CD8-positive, alpha-beta T cell (primary cell): ENCODE measurements at regions of chr2 and their contacts with region 1.

Region 1: GRCh38 chr2:102240640-102241370 is 54.0 kb downstream of the IL1RL2 start:
- DNase-seq: peak; percentile 71 to 92 (median 85)
- ATAC-seq: peak; percentile 92
- H3K4me3 ChIP-seq: no peak overlapping the region
- H3K4me3 Mint-ChIP-seq: peak overlapping the region; percentile 22
- H3K27ac ChIP-seq: peak overlapping the region in 1 of 2 experiments; percentile 22
- H3K27ac Mint-ChIP-seq: no peak overlapping the region
- H3K4me1 ChIP-seq: peaks cover 4% of the 10 kb centered on the region
- H3K4me1 Mint-ChIP-seq: peaks cover 9% of the 10 kb centered on the region
- H3K27me3 ChIP-seq: no peaks in the 10 kb centered on the region
- H3K27me3 Mint-ChIP-seq: peaks cover 2% of the 10 kb centered on the region
- CTCF ChIP-seq: peak; percentile 95

Region 2: GRCh38 chr2:101012706-101013181 is 1228.1 kb before region 1 on chr2:
- CTCF ChIA-PET with region 1: no interaction called
- POLR2A ChIA-PET with region 1: no interaction called
- intact Hi-C with region 1: loop called in 1 of 2 experiments (anchors 10 kb)
- DNase-seq: peak in 6 of 9 experiments; percentile 11 to 65 (median 44)
- ATAC-seq: peak; percentile 38
- H3K4me3 ChIP-seq: no peak overlapping the region
- H3K4me3 Mint-ChIP-seq: no peak overlapping the region
- H3K27ac ChIP-seq: no peak overlapping the region
- H3K27ac Mint-ChIP-seq: no peak overlapping the region
- H3K4me1 ChIP-seq: no peaks in the 10 kb centered on the region
- H3K4me1 Mint-ChIP-seq: peaks cover 15% of the 10 kb centered on the region
- H3K27me3 ChIP-seq: no peaks in the 10 kb centered on the region
- H3K27me3 Mint-ChIP-seq: no peaks in the 10 kb centered on the region
- CTCF ChIP-seq: peak; percentile 96

Region 3: DNA sequence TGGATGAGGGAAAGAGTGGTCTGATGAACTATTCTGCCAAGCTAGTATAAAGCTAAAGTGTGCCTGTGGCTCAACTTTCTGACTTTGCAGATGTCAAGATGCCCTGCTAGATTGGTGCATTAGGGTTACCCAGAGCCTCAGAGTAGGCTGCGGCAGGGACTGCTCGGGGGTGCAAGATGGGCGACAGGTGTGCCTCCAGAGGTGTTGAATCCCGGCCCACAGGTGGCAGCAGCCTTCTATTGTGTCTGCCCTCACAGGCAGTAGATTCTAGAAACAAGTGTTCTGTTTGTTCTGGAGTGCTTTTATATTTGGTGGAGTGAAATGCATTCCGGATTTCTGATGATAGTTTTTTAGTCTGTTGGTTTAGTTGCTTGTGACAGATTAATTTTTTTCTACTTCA is 380.6 kb before region 1 on chr2:
- CTCF ChIA-PET with region 1: no interaction called
- POLR2A ChIA-PET with region 1: no interaction called
- intact Hi-C with region 1: no loop called
- DNase-seq: peak in 1 of 9 experiments; percentile 12
- ATAC-seq: no peak
- H3K4me3 ChIP-seq: no peak overlapping the region
- H3K4me3 Mint-ChIP-seq: no peak overlapping the region
- H3K27ac ChIP-seq: no peak overlapping the region
- H3K27ac Mint-ChIP-seq: no peak overlapping the region
- H3K4me1 ChIP-seq: no peaks in the 10 kb centered on the region
- H3K4me1 Mint-ChIP-seq: peaks cover 9% of the 10 kb centered on the region
- H3K27me3 ChIP-seq: no peaks in the 10 kb centered on the region
- H3K27me3 Mint-ChIP-seq: no peaks in the 10 kb centered on the region
- CTCF ChIP-seq: no peak

Region 4: DNA sequence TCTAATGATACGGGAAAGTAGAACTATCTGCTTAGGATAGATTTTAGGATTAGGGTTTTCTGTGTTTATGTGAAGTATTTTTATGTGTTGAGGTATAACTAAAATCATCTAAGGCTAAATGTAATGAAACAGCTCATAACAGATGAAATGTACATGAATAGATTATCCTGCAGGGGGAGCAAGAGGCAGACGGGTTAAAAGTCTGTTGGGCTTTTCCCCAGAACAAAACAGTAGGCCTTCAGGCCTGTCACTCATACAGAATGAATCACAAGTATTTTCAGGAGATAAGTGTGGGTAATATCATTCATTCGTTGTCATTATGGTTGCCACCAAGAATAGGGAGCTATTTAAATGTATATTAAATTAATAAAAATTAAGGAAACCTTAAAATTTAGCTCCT is 356.9 kb before region 1 on chr2:
- CTCF ChIA-PET with region 1: interaction called, 14 read pairs
- POLR2A ChIA-PET with region 1: interaction called, 4 read pairs
- intact Hi-C with region 1: loop called in 1 of 2 experiments (anchors 1 kb)
- DNase-seq: peak in 4 of 9 experiments; percentile 13 to 66 (median 42)
- ATAC-seq: peak; percentile 64
- H3K4me3 ChIP-seq: no peak overlapping the region
- H3K4me3 Mint-ChIP-seq: no peak overlapping the region
- H3K27ac ChIP-seq: no peak overlapping the region
- H3K27ac Mint-ChIP-seq: no peak overlapping the region
- H3K4me1 ChIP-seq: no peaks in the 10 kb centered on the region
- H3K4me1 Mint-ChIP-seq: peaks cover 2% of the 10 kb centered on the region
- H3K27me3 ChIP-seq: no peaks in the 10 kb centered on the region
- H3K27me3 Mint-ChIP-seq: no peaks in the 10 kb centered on the region
- CTCF ChIP-seq: peak; percentile 58

Region 5: DNA sequence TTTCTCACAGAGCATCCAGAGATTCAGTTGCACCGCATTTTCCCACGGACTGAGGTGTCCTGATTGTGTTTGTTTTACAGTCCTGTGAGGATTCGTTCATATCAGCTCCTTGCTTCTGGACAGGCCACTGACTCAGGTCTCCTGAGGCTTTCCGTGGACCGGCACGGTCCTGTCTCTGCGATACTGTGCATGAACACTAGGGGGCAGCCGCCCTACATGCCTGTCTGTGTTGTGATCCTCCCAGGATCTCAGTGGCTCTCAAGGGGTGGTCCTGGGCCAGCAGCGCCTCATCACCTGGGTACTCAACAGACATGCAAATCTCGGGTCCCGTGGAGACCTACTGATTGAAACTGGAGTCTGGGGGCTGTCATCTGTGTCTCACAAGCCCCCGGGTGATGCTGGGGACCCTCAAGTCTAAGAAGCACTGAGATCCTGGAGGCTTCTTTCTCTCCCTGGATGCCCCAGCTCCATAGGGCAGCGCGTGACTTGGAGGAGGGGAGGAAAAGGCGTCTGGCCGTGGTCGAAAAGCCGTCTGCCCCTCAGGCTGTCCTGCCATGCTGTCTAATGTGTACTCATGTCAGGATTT is 220.1 kb before region 1 on chr2:
- CTCF ChIA-PET with region 1: interaction called, 175 read pairs
- POLR2A ChIA-PET with region 1: interaction called, 3 read pairs
- intact Hi-C with region 1: loop called (anchors 1 kb)
- DNase-seq: peak; percentile 63 to 91 (median 80)
- ATAC-seq: peak; percentile 99
- H3K4me3 ChIP-seq: no peak overlapping the region
- H3K4me3 Mint-ChIP-seq: no peak overlapping the region
- H3K27ac ChIP-seq: no peak overlapping the region
- H3K27ac Mint-ChIP-seq: no peak overlapping the region
- H3K4me1 ChIP-seq: peaks cover 4% of the 10 kb centered on the region
- H3K4me1 Mint-ChIP-seq: no peaks in the 10 kb centered on the region
- H3K27me3 ChIP-seq: no peaks in the 10 kb centered on the region
- H3K27me3 Mint-ChIP-seq: no peaks in the 10 kb centered on the region
- CTCF ChIP-seq: peak; percentile 93

Region 6: DNA sequence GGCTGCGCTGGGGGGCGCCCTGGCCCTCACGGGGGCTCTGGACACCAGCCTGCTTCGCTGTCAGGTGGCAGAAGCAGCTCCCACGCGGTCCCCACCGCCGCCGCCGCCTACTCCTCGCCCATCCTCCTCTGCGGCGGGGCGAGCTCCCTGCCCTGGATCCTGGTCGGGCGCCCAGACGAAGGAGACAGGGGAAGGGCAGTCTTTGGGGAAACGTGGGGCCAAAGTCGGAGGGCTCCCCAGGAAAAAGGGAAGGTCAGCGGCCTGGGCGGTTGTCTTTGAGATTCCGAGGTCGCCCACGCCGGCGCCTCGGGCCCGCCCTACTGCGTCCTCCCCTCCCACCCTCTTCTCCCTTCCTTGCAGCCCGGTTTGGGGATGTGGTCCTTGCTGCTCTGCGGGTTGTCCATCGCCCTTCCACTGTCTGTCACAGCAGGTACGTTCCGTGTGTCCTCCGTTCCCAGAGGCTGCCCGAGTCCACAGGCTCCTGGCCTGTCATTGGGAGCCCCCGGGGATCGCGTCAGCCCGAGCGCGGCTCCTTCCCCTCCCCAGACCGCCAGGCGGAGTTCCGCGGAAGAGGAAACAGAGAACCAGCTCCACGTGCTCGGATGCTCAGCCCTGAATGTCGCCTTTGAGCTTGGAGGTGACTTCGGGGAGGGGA is 53.2 kb before region 1 on chr2:
- CTCF ChIA-PET with region 1: interaction called, 18 read pairs
- POLR2A ChIA-PET with region 1: no interaction called
- intact Hi-C with region 1: loop called (anchors 1 to 2 kb)
- DNase-seq: peak in 8 of 9 experiments; percentile 9 to 59 (median 37)
- ATAC-seq: peak; percentile 75
- H3K4me3 ChIP-seq: peak overlapping the region; percentile 20 to 39
- H3K4me3 Mint-ChIP-seq: peak overlapping the region; percentile 87
- H3K27ac ChIP-seq: no peak overlapping the region
- H3K27ac Mint-ChIP-seq: no peak overlapping the region
- H3K4me1 ChIP-seq: no peaks in the 10 kb centered on the region
- H3K4me1 Mint-ChIP-seq: peaks cover 7% of the 10 kb centered on the region
- H3K27me3 ChIP-seq: no peaks in the 10 kb centered on the region
- H3K27me3 Mint-ChIP-seq: peaks cover 21% of the 10 kb centered on the region
- CTCF ChIP-seq: no peak

Region 7: GRCh38 chr2:102251042-102251848 is 10.4 kb after region 1 on chr2:
- CTCF ChIA-PET with region 1: interaction called, 34 read pairs
- POLR2A ChIA-PET with region 1: interaction called, 3 read pairs
- intact Hi-C with region 1: no loop called
- DNase-seq: peak; percentile 25 to 75 (median 63)
- ATAC-seq: peak; percentile 75
- H3K4me3 ChIP-seq: peak overlapping the region; percentile 57 to 63
- H3K4me3 Mint-ChIP-seq: peak overlapping the region; percentile 89
- H3K27ac ChIP-seq: no peak overlapping the region
- H3K27ac Mint-ChIP-seq: peak overlapping the region; percentile 52
- H3K4me1 ChIP-seq: no peaks in the 10 kb centered on the region
- H3K4me1 Mint-ChIP-seq: peaks cover 37% of the 10 kb centered on the region
- H3K27me3 ChIP-seq: no peaks in the 10 kb centered on the region
- H3K27me3 Mint-ChIP-seq: no peaks in the 10 kb centered on the region
- CTCF ChIP-seq: peak; percentile 87

Region 8: GRCh38 chr2:102355526-102356380 is 114.9 kb after region 1 on chr2 and contains the start of gene IL18R1:
- CTCF ChIA-PET with region 1: interaction called, 13 read pairs
- POLR2A ChIA-PET with region 1: interaction called, 4 read pairs
- intact Hi-C with region 1: no loop called
- DNase-seq: peak; percentile 22 to 87 (median 63)
- ATAC-seq: peak; percentile 79
- H3K4me3 ChIP-seq: peak within 1 kb of the TSS; percentile 91 to 97
- H3K4me3 Mint-ChIP-seq: peak within 1 kb of the TSS; percentile 95
- H3K27ac ChIP-seq: peak within 1 kb of the TSS; percentile 63 to 84
- H3K27ac Mint-ChIP-seq: peak within 1 kb of the TSS; percentile 96
- H3K4me1 ChIP-seq: peaks cover 14% of the 10 kb centered on the region
- H3K4me1 Mint-ChIP-seq: peaks cover 40% of the 10 kb centered on the region
- H3K27me3 ChIP-seq: no peaks in the 10 kb centered on the region
- H3K27me3 Mint-ChIP-seq: no peaks in the 10 kb centered on the region
- CTCF ChIP-seq: peak; percentile 79
- total RNA-seq, gene IL18R1: 7.0 to 7.7 TPM